ENCODE measurements at regions of chrX and their contacts with region 1.

Region 1: DNA sequence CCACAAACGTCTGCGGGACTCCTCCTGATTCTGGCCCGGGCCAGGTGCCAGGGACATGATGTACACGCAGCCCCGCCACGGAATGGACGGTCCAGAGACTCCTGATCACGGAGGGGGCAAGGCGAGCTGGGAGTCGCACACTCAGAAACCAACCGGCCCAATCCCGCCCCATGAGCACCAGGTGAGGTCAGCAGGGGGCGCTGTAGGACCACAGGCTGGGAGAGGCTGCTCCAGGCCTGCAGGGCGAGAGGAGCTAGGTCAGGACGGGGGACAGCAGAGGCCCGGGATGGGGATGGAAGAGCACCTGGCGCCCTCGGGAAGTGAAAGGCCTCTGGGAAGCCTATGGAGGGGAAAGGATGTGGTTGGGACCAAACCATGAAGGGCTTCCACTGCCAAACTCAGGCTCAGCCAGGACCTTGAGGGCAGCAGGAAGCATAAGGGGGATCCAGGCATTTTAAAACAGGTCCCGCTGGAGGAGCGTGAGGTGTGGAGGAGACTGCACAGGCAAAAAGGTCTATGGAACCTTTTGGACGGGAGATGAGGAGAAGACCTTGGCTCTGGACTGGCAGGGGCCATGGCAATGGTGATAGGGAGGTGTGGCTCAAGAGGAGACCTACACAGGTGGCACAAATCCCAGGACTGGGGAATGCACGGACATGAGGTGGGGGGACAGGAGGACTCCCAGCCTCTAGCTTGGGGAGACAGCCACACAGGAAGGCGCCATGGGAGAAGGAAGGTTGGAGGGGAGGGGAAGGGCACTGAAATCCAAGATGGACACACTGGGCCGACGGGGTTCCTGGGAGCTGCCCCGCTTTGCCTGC is 79.2 kb downstream of the MTMR1 start:
- DNase-seq: peak; percentile 50 to 84 (median 69)
- ATAC-seq: peak; percentile 57
- H3K4me3 ChIP-seq: no peak overlapping the region
- H3K4me3 Mint-ChIP-seq: no peak overlapping the region
- H3K27ac ChIP-seq: no peak overlapping the region
- H3K27ac Mint-ChIP-seq: no peak overlapping the region
- H3K4me1 ChIP-seq: no peaks in the 10 kb centered on the region
- H3K4me1 Mint-ChIP-seq: no peaks in the 10 kb centered on the region
- H3K27me3 ChIP-seq: no peaks in the 10 kb centered on the region
- H3K27me3 Mint-ChIP-seq: no peaks in the 10 kb centered on the region
- CTCF ChIP-seq: peak; percentile 64

Region 2: GRCh38 chrX:151082076-151082948 is 310.0 kb after region 1 on chrX:
- CTCF ChIA-PET with region 1: interaction called, 107 read pairs
- POLR2A ChIA-PET with region 1: no interaction called
- intact Hi-C with region 1: loop called in 1 of 2 experiments (anchors 1 kb)
- DNase-seq: peak; percentile 19 to 70 (median 46)
- ATAC-seq: peak; percentile 78
- H3K4me3 ChIP-seq: no peak overlapping the region
- H3K4me3 Mint-ChIP-seq: peak overlapping the region; percentile 22
- H3K27ac ChIP-seq: no peak overlapping the region
- H3K27ac Mint-ChIP-seq: no peak overlapping the region
- H3K4me1 ChIP-seq: peaks cover 3% of the 10 kb centered on the region
- H3K4me1 Mint-ChIP-seq: peaks cover 4% of the 10 kb centered on the region
- H3K27me3 ChIP-seq: no peaks in the 10 kb centered on the region
- H3K27me3 Mint-ChIP-seq: peaks cover 17% of the 10 kb centered on the region
- CTCF ChIP-seq: peak; percentile 66

Region 3: GRCh38 chrX:151488677-151489076 is 716.3 kb after region 1 on chrX:
- CTCF ChIA-PET with region 1: no interaction called
- POLR2A ChIA-PET with region 1: no interaction called
- intact Hi-C with region 1: loop called in 1 of 2 experiments (anchors 5 kb)
- DNase-seq: peak in 6 of 9 experiments; percentile 0 to 49 (median 18)
- ATAC-seq: no peak
- H3K4me3 ChIP-seq: no peak overlapping the region
- H3K4me3 Mint-ChIP-seq: no peak overlapping the region
- H3K27ac ChIP-seq: no peak overlapping the region
- H3K27ac Mint-ChIP-seq: no peak overlapping the region
- H3K4me1 ChIP-seq: no peaks in the 10 kb centered on the region
- H3K4me1 Mint-ChIP-seq: no peaks in the 10 kb centered on the region
- H3K27me3 ChIP-seq: no peaks in the 10 kb centered on the region
- H3K27me3 Mint-ChIP-seq: no peaks in the 10 kb centered on the region
- CTCF ChIP-seq: no peak

Region 4: DNA sequence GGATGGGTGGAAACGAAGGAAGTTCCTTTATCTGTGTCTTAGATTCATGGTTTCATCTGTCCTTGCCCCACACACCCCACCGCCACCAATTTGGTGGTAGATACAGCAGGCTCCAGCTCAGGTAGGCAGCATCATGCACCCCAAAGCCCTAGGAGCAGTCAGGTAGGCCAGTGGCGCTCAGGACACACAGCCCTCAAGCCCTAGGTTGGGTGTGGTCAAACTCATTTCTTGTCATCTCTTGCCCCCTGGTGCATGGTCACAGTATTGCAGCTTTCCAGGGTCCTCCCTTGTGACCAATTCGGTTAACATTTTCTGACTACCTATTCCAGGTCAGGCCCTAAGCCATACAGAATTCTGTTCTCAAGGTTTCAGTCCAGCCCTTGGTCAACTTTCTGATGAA is 908.4 kb after region 1 on chrX:
- CTCF ChIA-PET with region 1: no interaction called
- POLR2A ChIA-PET with region 1: no interaction called
- intact Hi-C with region 1: loop called (anchors 2 to 5 kb)
- DNase-seq: peak; percentile 6 to 65 (median 45)
- ATAC-seq: peak; percentile 34
- H3K4me3 ChIP-seq: no peak overlapping the region
- H3K4me3 Mint-ChIP-seq: no peak overlapping the region
- H3K27ac ChIP-seq: no peak overlapping the region
- H3K27ac Mint-ChIP-seq: no peak overlapping the region
- H3K4me1 ChIP-seq: no peaks in the 10 kb centered on the region
- H3K4me1 Mint-ChIP-seq: no peaks in the 10 kb centered on the region
- H3K27me3 ChIP-seq: no peaks in the 10 kb centered on the region
- H3K27me3 Mint-ChIP-seq: peaks cover 10% of the 10 kb centered on the region
- CTCF ChIP-seq: peak; percentile 44